GM12878 (cell line): ENCODE measurements at regions of chr17 and their contacts with region 1.

Region 1: GRCh38 chr17:16438557-16439302 is 23.4 kb downstream of the TRPV2 start:
- DNase-seq: peak; percentile 98
- ATAC-seq: peak; percentile 87
- H3K4me3 ChIP-seq: peak overlapping the region; percentile 97
- H3K27ac ChIP-seq: peak overlapping the region; percentile 79
- H3K4me1 ChIP-seq: peaks cover 15% of the 10 kb centered on the region
- H3K27me3 ChIP-seq: no peaks in the 10 kb centered on the region
- CTCF ChIP-seq: no peak
- EP300 ChIP-seq: peak in 1 of 2 experiments; percentile 28; a peak in 1 of 4 replicates
- POLR2A ChIP-seq: peak; percentile 96
- RAD21 ChIP-seq: no peak

Region 2: GRCh38 chr17:16380640-16381495 is 57.9 kb before region 1 on chr17 and contains the start of gene UBB:
- CTCF ChIA-PET with region 1: interaction called, 4 read pairs
- POLR2A ChIA-PET with region 1: interaction called, 18 read pairs
- RAD21 ChIA-PET with region 1: interaction called, 5 read pairs
- SMC1A ChIA-PET with region 1: interaction called, 6 read pairs
- in situ Hi-C with region 1: no loop called
- intact Hi-C with region 1: loop called (anchors 2 kb)
- DNase-seq: peak; percentile 89
- ATAC-seq: peak; percentile 97
- H3K4me3 ChIP-seq: peak within 1 kb of the TSS; percentile 76
- H3K27ac ChIP-seq: peak within 1 kb of the TSS; percentile 100
- H3K4me1 ChIP-seq: peaks cover 16% of the 10 kb centered on the region
- H3K27me3 ChIP-seq: no peaks in the 10 kb centered on the region
- CTCF ChIP-seq: peak in 2 of 3 experiments; percentile 20 to 24; a peak in 2 of 6 replicates
- EP300 ChIP-seq: no peak; a peak in 2 of 4 replicates
- POLR2A ChIP-seq: peak; percentile 100
- RAD21 ChIP-seq: no peak
- polyA plus RNA-seq, gene UBB: 4,008 to 4,246 TPM

Region 3: GRCh38 chr17:16428098-16428882 is 10.4 kb before region 1 on chr17:
- CTCF ChIA-PET with region 1: interaction called, 17 read pairs
- POLR2A ChIA-PET with region 1: interaction called, 6 read pairs
- RAD21 ChIA-PET with region 1: interaction called, 5 read pairs
- SMC1A ChIA-PET with region 1: interaction called, 12 read pairs
- in situ Hi-C with region 1: no loop called
- intact Hi-C with region 1: no loop called
- DNase-seq: no peak
- ATAC-seq: peak; percentile 93
- H3K4me3 ChIP-seq: no peak overlapping the region
- H3K27ac ChIP-seq: no peak overlapping the region
- H3K4me1 ChIP-seq: no peaks in the 10 kb centered on the region
- H3K27me3 ChIP-seq: no peaks in the 10 kb centered on the region
- CTCF ChIP-seq: peak; percentile 58 to 76 (median 75)
- EP300 ChIP-seq: no peak
- POLR2A ChIP-seq: no peak; the same call in 1 of the 2 replicates
- RAD21 ChIP-seq: peak; percentile 44

Region 4: DNA sequence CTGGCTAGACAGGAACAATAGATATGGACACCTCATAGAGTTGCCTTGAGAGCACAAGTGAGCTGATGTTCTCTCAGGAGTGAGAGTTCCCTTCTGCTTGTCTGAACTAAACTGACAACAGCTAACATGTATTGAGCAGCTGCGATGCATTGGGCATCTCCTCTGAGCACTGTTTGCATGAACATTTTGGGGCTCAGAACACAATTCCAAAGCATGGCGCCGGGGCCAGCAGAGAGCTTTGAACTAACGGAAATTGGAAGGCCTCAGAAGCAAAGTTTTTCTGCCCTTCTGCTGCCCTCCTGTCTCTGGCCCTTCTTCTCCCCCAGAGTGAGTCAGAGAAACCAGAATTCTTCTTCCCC is 14.7 kb after region 1 on chr17:
- CTCF ChIA-PET with region 1: interaction called, 16 read pairs
- POLR2A ChIA-PET with region 1: no interaction called
- RAD21 ChIA-PET with region 1: interaction called, 5 read pairs
- SMC1A ChIA-PET with region 1: interaction called, 10 read pairs
- in situ Hi-C with region 1: no loop called
- intact Hi-C with region 1: no loop called
- DNase-seq: no peak
- ATAC-seq: no peak
- H3K4me3 ChIP-seq: no peak overlapping the region
- H3K27ac ChIP-seq: no peak overlapping the region
- H3K4me1 ChIP-seq: peaks cover 4% of the 10 kb centered on the region; the same call in 1 of the 2 replicates
- H3K27me3 ChIP-seq: no peaks in the 10 kb centered on the region
- CTCF ChIP-seq: no peak
- EP300 ChIP-seq: no peak
- POLR2A ChIP-seq: no peak
- RAD21 ChIP-seq: no peak